Natural killer cell (primary cell): ENCODE measurements at regions of chr2 and their contacts with region 1.

Region 1: DNA sequence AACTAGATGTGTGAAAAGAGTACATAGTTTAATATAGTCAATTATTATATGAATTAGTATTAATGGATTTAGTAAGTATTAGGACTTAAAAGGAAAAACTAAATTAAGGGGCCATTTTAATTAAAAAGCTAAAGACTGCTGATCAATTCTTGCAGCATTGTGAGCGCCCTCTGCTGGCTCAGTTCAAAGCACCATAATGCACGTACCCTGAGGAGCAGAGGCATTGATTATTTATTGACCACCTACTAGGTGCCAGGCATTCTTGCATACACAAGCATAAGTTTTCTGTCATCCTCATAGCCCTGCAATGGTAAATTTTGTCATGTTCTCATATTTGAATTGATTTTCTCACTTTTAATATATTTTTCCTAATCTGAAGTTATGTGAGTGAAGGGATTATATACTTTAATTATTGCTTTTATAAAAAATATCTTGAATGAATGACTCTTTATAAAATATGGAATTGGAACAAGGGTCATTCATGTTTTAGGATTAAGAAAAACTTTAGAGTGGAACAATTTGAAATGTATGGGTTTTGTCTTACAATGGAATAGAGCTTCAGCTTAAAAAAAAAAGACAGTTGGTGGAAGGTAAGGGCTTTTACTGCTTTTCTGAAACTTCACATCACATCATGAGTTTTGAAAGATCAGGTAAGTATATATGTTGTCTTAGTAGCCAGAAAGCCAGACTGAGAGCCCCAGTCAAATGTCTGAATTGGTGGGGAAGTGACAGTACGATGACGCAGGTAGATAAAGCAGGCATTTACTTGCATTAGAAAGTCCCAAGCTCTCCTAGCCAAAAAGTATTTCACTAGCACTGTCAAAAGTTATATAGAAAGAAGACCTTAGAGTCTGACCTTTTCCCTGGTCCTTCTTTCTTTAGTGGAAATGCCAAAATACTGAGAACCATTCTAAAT is 9.7 kb downstream of the ITGA4 start:
- DNase-seq: peak; percentile 70 to 91
- ATAC-seq: peak; percentile 46 to 61 (median 60)
- H3K4me3 ChIP-seq: no peak overlapping the region
- H3K4me3 Mint-ChIP-seq: peak overlapping the region; percentile 43
- H3K27ac ChIP-seq: peak overlapping the region; percentile 50
- H3K27ac Mint-ChIP-seq: peak overlapping the region; percentile 79 to 84
- H3K4me1 ChIP-seq: peaks cover 19% of the 10 kb centered on the region
- H3K4me1 Mint-ChIP-seq: peaks cover 78 to 80% of the 10 kb centered on the region in 2 donors
- H3K27me3 ChIP-seq: no peaks in the 10 kb centered on the region
- H3K27me3 Mint-ChIP-seq: no peaks in the 10 kb centered on the region
- CTCF ChIP-seq: peak; percentile 84

Region 2: DNA sequence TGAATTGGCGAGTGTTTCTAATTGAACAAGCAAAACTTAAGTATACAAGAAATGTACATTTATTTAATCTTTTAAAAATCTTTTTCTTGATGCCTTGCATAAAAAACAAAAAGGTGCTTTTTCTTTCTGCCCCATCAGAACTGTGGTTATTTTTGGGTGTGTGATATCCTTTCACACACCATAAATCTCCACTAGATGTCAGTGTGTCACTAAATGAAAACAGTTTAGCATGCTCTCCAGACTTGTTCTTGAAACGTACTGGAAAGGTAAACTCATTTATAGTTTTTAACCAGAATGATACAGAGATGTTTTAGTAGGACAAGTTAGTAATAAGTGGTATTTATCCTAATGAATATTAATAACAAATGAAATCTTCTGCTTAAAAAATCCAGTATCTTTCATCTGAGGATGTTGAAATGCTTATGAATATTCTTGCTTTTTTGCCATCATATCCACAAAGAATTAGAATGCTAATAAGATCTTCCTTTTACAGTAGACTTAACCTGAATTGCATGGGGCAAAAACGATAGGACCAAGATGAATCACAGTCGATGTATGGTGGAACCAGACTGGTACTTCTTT is 389.7 kb before region 1 on chr2:
- intact Hi-C with region 1: loop called (anchors 5 kb)
- DNase-seq: peak in 1 of 2 donors; percentile 84
- ATAC-seq: peak; percentile 83 to 93 (median 92)
- H3K4me3 ChIP-seq: no peak overlapping the region
- H3K4me3 Mint-ChIP-seq: no peak overlapping the region
- H3K27ac ChIP-seq: no peak overlapping the region
- H3K27ac Mint-ChIP-seq: peak overlapping the region in 1 of 2 donors; percentile 34
- H3K4me1 ChIP-seq: no peaks in the 10 kb centered on the region
- H3K4me1 Mint-ChIP-seq: peaks cover 3 to 7% of the 10 kb centered on the region in 2 donors
- H3K27me3 ChIP-seq: no peaks in the 10 kb centered on the region
- H3K27me3 Mint-ChIP-seq: no peaks in the 10 kb centered on the region
- CTCF ChIP-seq: peak; percentile 86

Region 3: GRCh38 chr2:181104512-181105115 is 362.3 kb before region 1 on chr2:
- intact Hi-C with region 1: loop called (anchors 2 kb)
- DNase-seq: peak in 1 of 2 donors; percentile 81
- ATAC-seq: peak in 2 of 3 donors; percentile 66 to 75
- H3K4me3 ChIP-seq: no peak overlapping the region
- H3K4me3 Mint-ChIP-seq: no peak overlapping the region
- H3K27ac ChIP-seq: peak overlapping the region; percentile 29
- H3K27ac Mint-ChIP-seq: peak overlapping the region in 1 of 2 donors; percentile 6
- H3K4me1 ChIP-seq: peaks cover 6% of the 10 kb centered on the region
- H3K4me1 Mint-ChIP-seq: peaks cover 25 to 27% of the 10 kb centered on the region in 2 donors
- H3K27me3 ChIP-seq: no peaks in the 10 kb centered on the region
- H3K27me3 Mint-ChIP-seq: peaks cover 0 to 3% of the 10 kb centered on the region in 2 donors
- CTCF ChIP-seq: peak; percentile 89

Region 4: DNA sequence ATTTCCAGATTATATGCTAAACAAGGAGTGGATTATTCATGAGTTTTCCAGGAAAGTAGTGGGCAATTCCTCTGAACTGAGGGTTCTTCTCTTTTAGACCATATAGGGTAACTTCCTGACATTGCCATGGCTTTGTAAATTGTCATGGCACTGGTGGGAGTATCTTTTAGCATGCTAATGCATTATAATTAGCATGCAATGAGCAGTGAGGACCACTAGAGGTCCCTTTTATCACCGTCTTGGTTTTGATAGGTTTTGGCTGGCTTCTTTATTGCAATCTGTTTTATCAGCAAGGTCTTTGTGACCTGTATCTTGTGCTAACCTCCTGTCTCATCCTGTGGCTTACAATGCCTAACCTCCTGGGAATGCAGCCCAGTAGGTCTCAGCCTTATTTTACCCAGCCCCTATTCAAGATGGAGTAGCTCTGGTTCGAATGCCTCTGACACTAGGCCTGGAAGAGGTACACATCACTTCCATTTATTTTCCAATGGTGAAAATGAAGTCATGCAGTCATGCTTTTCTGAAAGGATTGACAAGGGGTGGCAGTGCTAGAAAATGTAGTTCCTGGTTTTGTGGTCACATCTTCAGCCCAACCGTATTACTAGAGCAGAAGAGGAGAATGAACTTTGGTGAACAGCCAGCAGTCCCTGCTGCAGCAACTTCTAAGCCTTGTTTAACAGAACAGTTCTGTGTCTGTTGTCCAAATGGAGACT is 36.4 kb before region 1 on chr2:
- intact Hi-C with region 1: loop called (anchors 2 kb)
- DNase-seq: peak in 1 of 2 donors; percentile 67
- ATAC-seq: peak; percentile 79 to 92 (median 80)
- H3K4me3 ChIP-seq: no peak overlapping the region
- H3K4me3 Mint-ChIP-seq: peak overlapping the region; percentile 26
- H3K27ac ChIP-seq: peak overlapping the region; percentile 16
- H3K27ac Mint-ChIP-seq: peak overlapping the region; percentile 61 to 67
- H3K4me1 ChIP-seq: peaks cover 8% of the 10 kb centered on the region
- H3K4me1 Mint-ChIP-seq: peaks cover 18 to 23% of the 10 kb centered on the region in 2 donors
- H3K27me3 ChIP-seq: no peaks in the 10 kb centered on the region
- H3K27me3 Mint-ChIP-seq: no peaks in the 10 kb centered on the region
- CTCF ChIP-seq: peak; percentile 70

Region 5: DNA sequence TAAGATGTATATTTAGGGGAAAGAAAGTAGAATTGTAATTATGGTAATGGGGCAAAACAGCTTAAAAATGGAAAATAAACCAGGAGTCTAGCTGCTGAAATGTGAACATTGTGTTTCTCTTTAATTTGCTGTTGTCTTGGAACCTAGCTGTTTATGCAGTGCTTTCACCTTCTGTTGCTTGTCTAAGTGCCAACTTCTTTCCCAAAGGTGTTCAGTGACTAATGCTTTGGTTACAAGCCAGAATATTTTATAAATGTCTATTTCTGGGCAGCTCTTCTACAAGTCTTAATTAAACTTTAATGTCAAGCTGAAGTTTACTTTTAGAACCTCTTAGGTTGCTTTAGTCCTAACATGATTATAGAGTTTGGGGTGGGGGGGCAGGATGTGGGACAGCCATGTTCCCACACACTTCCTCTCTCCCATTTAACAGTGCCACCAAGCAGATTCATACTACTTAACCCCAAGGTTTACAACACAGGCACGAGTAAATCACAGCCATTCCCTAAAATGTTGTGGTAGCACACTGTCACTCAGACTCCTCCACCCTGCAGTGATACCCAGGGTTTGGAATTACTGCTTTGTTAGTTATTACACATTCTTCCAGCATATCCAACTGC is 50.9 kb after region 1 on chr2:
- intact Hi-C with region 1: no loop called
- DNase-seq: peak in 1 of 2 donors; percentile 39
- ATAC-seq: peak; percentile 43 to 51 (median 50)
- H3K4me3 ChIP-seq: no peak overlapping the region
- H3K4me3 Mint-ChIP-seq: no peak overlapping the region
- H3K27ac ChIP-seq: no peak overlapping the region
- H3K27ac Mint-ChIP-seq: peak overlapping the region; percentile 72 to 74
- H3K4me1 ChIP-seq: peaks cover 6% of the 10 kb centered on the region
- H3K4me1 Mint-ChIP-seq: peaks cover 28 to 30% of the 10 kb centered on the region in 2 donors
- H3K27me3 ChIP-seq: no peaks in the 10 kb centered on the region
- H3K27me3 Mint-ChIP-seq: no peaks in the 10 kb centered on the region
- CTCF ChIP-seq: no peak

Region 6: DNA sequence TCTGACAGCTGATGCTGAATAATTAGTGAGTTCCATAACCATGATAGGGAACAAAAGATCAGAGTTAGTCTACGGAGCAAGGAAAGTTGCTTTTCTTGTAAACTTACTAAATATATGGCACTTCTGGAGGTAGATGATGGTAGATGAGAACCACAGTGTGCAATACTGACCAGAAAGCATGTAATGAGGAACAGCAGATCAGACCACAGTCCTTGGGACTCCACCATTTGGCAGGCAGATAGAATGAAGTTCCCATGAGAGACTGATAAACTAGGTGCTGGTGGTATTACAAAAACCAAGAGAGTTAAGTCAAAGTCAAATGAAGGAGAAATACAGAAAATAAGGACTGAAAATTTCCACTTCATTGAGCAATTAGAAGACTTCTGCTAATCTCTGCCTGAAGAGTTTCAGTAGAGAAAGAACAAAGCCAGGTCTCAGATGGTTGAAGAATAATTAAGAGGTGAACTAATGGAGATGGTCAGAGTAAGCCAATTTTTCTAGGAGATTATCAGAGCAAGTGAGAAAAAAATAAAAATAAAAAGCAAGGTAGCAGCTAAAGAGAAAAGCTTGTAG is 179.6 kb after region 1 on chr2:
- intact Hi-C with region 1: no loop called
- DNase-seq: no peak
- ATAC-seq: no peak
- H3K4me3 ChIP-seq: no peak overlapping the region
- H3K4me3 Mint-ChIP-seq: no peak overlapping the region
- H3K27ac ChIP-seq: no peak overlapping the region
- H3K27ac Mint-ChIP-seq: no peak overlapping the region
- H3K4me1 ChIP-seq: no peaks in the 10 kb centered on the region
- H3K4me1 Mint-ChIP-seq: no peaks in the 10 kb centered on the region
- H3K27me3 ChIP-seq: peaks cover 6% of the 10 kb centered on the region
- H3K27me3 Mint-ChIP-seq: peaks cover 37 to 73% of the 10 kb centered on the region in 2 donors
- CTCF ChIP-seq: no peak

Region 7: GRCh38 chr2:181891258-181891965 is 424.5 kb after region 1 on chr2 and contains the start of gene ITPRID2:
- intact Hi-C with region 1: loop called (anchors 5 kb)
- DNase-seq: peak; percentile 62 to 83
- ATAC-seq: peak; percentile 95 to 98 (median 95)
- H3K4me3 ChIP-seq: peak within 1 kb of the TSS; percentile 91
- H3K4me3 Mint-ChIP-seq: peak within 1 kb of the TSS; percentile 97
- H3K27ac ChIP-seq: peak within 1 kb of the TSS; percentile 77
- H3K27ac Mint-ChIP-seq: peak within 1 kb of the TSS; percentile 76 to 97
- H3K4me1 ChIP-seq: peaks cover 6% of the 10 kb centered on the region
- H3K4me1 Mint-ChIP-seq: peaks cover 28 to 29% of the 10 kb centered on the region in 2 donors
- H3K27me3 ChIP-seq: peaks cover 9% of the 10 kb centered on the region
- H3K27me3 Mint-ChIP-seq: peaks cover 14 to 22% of the 10 kb centered on the region in 2 donors
- CTCF ChIP-seq: no peak
- total RNA-seq, gene ITPRID2: 63.7 to 89.6 (median 65.8) TPM